GM12878 (cell line): ENCODE measurements at regions of chr9 and their contacts with region 1.

Region 1: DNA sequence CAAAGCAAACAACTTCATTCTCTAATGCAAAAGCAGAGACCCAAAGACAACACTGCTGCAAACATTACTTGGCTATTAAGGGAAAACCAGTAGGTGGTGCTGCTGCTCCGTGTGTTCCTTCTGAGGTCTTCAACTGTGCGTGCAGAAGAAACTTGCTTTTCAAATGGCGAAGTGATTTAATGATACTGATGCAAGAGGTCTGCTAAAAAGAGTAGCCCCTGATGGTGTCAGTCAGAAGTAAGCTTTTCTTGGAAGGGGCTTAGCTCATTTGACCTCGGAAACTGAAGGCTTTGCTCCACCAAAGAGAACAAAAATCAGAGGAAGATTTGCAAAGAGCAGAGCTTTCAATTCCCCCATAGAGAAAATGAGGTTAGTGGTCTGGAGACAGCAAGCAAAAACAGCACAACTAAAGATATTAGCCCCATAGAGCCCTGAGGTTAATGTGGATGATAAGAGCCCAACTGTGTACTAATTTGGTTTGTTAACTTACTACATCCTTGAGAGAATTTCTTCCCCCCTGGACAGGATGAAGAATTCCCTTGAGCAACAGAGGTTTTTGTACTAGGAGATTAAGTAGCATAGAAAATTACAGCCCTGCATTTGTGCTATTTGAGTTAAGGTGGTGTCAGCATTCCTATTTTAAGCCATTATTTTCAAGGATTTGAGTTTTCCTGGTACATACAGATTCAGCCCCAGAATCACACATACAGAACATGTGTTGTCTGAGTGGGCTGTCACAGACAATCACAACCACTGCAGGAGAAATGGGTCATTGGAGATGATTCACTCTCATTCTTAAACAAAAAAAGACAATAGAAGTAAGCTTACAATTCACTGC is 153.2 kb upstream of the C9orf72 start:
- DNase-seq: peak; percentile 20
- ATAC-seq: peak; percentile 88
- H3K4me3 ChIP-seq: no peak overlapping the region
- H3K27ac ChIP-seq: no peak overlapping the region
- H3K4me1 ChIP-seq: no peaks in the 10 kb centered on the region
- H3K27me3 ChIP-seq: no peaks in the 10 kb centered on the region; a peak in 1 of 4 replicates
- CTCF ChIP-seq: peak; percentile 78 to 89 (median 81); a peak in 5 of 6 replicates
- EP300 ChIP-seq: no peak
- POLR2A ChIP-seq: no peak
- RAD21 ChIP-seq: peak; percentile 93

Region 2: DNA sequence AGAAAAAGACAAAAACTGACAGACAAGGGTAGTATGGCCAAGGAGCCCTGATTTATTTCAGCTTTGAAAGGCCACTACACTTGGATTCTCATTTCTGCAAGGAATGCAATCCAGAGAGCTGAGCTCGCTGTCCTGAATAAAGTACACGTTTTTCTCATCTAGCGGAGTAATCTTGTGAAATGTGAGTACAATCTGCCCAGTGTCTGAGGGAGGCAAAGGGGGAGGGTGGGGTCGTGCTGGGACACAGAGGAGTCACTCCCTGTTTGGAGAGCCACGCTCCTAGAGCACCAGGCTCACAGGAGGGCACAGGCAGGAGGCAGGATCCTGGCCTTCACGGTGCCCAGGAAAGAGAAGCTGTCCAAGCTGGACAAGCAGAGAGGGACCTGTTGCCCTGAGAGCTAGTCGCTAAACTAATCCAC is 253.3 kb before region 1 on chr9:
- CTCF ChIA-PET with region 1: no interaction called
- POLR2A ChIA-PET with region 1: no interaction called
- RAD21 ChIA-PET with region 1: no interaction called
- SMC1A ChIA-PET with region 1: no interaction called
- in situ Hi-C with region 1: no loop called
- intact Hi-C with region 1: no loop called
- DNase-seq: no peak
- ATAC-seq: no peak
- H3K4me3 ChIP-seq: no peak overlapping the region
- H3K27ac ChIP-seq: no peak overlapping the region
- H3K4me1 ChIP-seq: no peaks in the 10 kb centered on the region
- H3K27me3 ChIP-seq: no peaks in the 10 kb centered on the region
- CTCF ChIP-seq: no peak
- EP300 ChIP-seq: no peak
- POLR2A ChIP-seq: no peak
- RAD21 ChIP-seq: no peak

Region 3: GRCh38 chr9:27747450-27747849 is 21.0 kb after region 1 on chr9:
- CTCF ChIA-PET with region 1: interaction called, 28 read pairs
- POLR2A ChIA-PET with region 1: no interaction called
- RAD21 ChIA-PET with region 1: interaction called, 5 read pairs
- SMC1A ChIA-PET with region 1: interaction called, 8 read pairs
- in situ Hi-C with region 1: no loop called
- intact Hi-C with region 1: no loop called
- DNase-seq: no peak
- ATAC-seq: no peak
- H3K4me3 ChIP-seq: no peak overlapping the region
- H3K27ac ChIP-seq: no peak overlapping the region
- H3K4me1 ChIP-seq: no peaks in the 10 kb centered on the region
- H3K27me3 ChIP-seq: no peaks in the 10 kb centered on the region
- CTCF ChIP-seq: no peak
- EP300 ChIP-seq: no peak
- POLR2A ChIP-seq: no peak
- RAD21 ChIP-seq: no peak

Region 4: DNA sequence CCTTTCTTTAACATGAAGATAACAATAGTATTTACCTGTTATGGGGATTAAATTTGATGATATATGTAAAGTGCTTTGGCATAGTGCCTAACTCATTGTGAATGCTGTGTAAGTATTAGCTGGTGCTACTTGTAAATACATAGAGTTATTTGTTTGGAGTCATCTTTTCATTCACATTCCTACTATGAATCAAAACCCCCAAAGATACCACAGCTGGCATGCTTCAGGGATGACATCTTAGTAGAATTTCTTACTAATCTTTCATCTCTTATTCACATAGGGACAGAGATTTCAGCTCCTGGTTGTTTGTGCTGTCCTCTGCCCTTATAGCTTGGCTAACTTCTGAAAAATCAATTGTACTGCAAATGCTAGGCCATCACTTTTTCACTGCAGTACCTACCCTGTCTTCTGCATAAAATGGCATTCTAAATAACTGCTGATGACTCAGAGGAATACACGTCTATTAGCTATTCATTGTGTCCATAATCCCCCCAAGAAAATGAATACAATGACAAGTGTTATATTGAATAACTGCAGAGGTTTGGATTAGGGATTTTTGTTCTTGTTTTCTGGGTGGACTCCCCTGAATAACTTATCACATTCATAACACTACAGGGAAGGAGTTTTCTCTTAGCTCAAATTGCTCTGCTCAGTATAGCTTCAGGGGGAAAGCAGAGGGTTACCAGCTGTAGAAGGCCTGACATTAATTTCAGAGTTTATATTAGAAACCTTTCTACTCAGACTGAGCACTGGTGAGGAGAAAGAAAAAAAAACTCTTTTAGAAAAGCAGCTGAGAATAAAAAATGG is 39.0 kb after region 1 on chr9:
- CTCF ChIA-PET with region 1: interaction called, 3 read pairs
- POLR2A ChIA-PET with region 1: no interaction called
- RAD21 ChIA-PET with region 1: interaction called, 8 read pairs
- SMC1A ChIA-PET with region 1: interaction called, 10 read pairs
- in situ Hi-C with region 1: no loop called
- intact Hi-C with region 1: no loop called
- DNase-seq: no peak
- ATAC-seq: no peak; the same call in 2 of the 3 replicates
- H3K4me3 ChIP-seq: no peak overlapping the region
- H3K27ac ChIP-seq: no peak overlapping the region
- H3K4me1 ChIP-seq: no peaks in the 10 kb centered on the region
- H3K27me3 ChIP-seq: no peaks in the 10 kb centered on the region
- CTCF ChIP-seq: no peak
- EP300 ChIP-seq: no peak
- POLR2A ChIP-seq: no peak
- RAD21 ChIP-seq: no peak

Region 5: GRCh38 chr9:27836661-27837401 is 110.4 kb after region 1 on chr9:
- CTCF ChIA-PET with region 1: no interaction called
- POLR2A ChIA-PET with region 1: no interaction called
- RAD21 ChIA-PET with region 1: interaction called, 7 read pairs
- SMC1A ChIA-PET with region 1: interaction called, 10 read pairs
- in situ Hi-C with region 1: no loop called
- intact Hi-C with region 1: no loop called
- DNase-seq: no peak
- ATAC-seq: no peak
- H3K4me3 ChIP-seq: no peak overlapping the region
- H3K27ac ChIP-seq: no peak overlapping the region
- H3K4me1 ChIP-seq: no peaks in the 10 kb centered on the region
- H3K27me3 ChIP-seq: no peaks in the 10 kb centered on the region
- CTCF ChIP-seq: no peak
- EP300 ChIP-seq: no peak
- POLR2A ChIP-seq: no peak
- RAD21 ChIP-seq: no peak

Region 6: DNA sequence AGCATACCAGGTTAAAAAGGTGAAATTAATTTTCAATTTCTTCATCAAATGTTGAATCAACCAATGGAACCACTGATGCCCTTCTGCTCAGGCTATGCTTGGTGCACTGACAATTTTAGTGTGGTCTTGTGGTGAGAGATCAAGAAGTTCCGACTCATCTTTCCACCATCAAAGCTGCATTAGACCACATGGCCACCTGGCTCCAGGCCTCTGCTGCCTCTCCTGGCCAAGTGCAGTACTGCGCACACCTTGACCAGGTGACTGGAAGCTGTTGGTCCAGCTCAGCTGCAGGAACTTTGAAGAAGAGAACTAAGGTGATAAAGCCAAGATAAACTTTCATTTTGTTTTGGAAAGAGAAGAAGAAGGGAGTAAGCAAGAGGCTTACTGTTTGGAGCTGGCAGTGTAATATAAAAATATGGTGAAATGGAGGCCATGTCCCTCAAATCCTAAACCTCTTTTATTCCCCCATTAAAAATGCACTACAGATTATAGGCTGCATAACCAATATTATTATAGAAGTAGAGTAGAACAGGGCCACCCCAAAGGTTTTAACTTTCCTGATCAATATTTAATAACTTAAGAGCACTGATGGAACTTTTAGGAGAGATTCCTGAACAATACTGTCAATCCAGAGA is 162.3 kb after region 1 on chr9:
- CTCF ChIA-PET with region 1: interaction called, 57 read pairs
- POLR2A ChIA-PET with region 1: no interaction called
- RAD21 ChIA-PET with region 1: interaction called, 18 read pairs
- SMC1A ChIA-PET with region 1: interaction called, 12 read pairs
- in situ Hi-C with region 1: no loop called
- intact Hi-C with region 1: loop called (anchors 1 kb)
- DNase-seq: peak; percentile 4
- ATAC-seq: peak; percentile 92
- H3K4me3 ChIP-seq: no peak overlapping the region
- H3K27ac ChIP-seq: no peak overlapping the region
- H3K4me1 ChIP-seq: no peaks in the 10 kb centered on the region
- H3K27me3 ChIP-seq: no peaks in the 10 kb centered on the region
- CTCF ChIP-seq: peak; percentile 66 to 93 (median 90)
- EP300 ChIP-seq: no peak
- POLR2A ChIP-seq: no peak
- RAD21 ChIP-seq: peak; percentile 56

Region 7: DNA sequence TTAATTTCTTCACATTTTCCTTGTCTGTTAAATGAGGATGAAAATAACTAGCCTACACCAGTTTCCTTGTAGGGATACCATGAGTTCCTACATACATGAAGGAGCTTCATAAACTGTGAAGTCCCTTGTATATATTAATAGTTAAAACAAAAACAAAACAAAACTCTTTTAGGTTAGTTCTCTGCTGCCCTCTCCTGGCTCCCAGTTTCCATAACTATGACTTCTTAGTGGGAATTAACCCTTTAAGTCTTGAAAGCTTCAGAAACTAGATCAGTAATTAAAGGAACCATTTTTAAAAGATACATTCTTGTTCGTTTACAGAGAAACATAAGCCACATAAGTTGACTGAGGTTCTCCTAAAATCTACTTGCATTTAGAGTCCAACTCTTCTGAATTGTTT is 346.8 kb after region 1 on chr9:
- CTCF ChIA-PET with region 1: interaction called, 93 read pairs
- POLR2A ChIA-PET with region 1: no interaction called
- RAD21 ChIA-PET with region 1: interaction called, 44 read pairs
- SMC1A ChIA-PET with region 1: interaction called, 100 read pairs
- in situ Hi-C with region 1: loop called (anchors 5 kb)
- intact Hi-C with region 1: loop called (anchors 1 kb)
- DNase-seq: no peak
- ATAC-seq: peak; percentile 44; the same call in 2 of the 3 replicates
- H3K4me3 ChIP-seq: no peak overlapping the region
- H3K27ac ChIP-seq: no peak overlapping the region
- H3K4me1 ChIP-seq: no peaks in the 10 kb centered on the region
- H3K27me3 ChIP-seq: no peaks in the 10 kb centered on the region
- CTCF ChIP-seq: peak; percentile 22 to 50 (median 23); a peak in 3 of 6 replicates
- EP300 ChIP-seq: no peak
- POLR2A ChIP-seq: no peak
- RAD21 ChIP-seq: peak; percentile 57